Left cardiac atrium (tissue), 4 donors: ENCODE measurements at regions of chr16 and their contacts with region 1.

Region 1: GRCh38 chr16:527006-527753 is at the start of gene CAPN15:
- DNase-seq: peak; percentile 91
- ATAC-seq: peak; percentile 89 to 90
- total RNA-seq, gene CAPN15: 19.2 to 25.8 TPM

Region 2: GRCh38 chr16:425082-425718 is 102.0 kb before region 1 on chr16 and contains the start of gene RAB11FIP3:
- intact Hi-C with region 1: loop called in 1 of 2 experiments (anchors 5 kb)
- DNase-seq: peak; percentile 89
- ATAC-seq: peak; percentile 86 to 88
- total RNA-seq, gene RAB11FIP3: 24.2 to 38.1 TPM